Endothelial cell of umbilical vein (primary cell): ENCODE measurements at regions of chr17 and their contacts with region 1.

Region 1: DNA sequence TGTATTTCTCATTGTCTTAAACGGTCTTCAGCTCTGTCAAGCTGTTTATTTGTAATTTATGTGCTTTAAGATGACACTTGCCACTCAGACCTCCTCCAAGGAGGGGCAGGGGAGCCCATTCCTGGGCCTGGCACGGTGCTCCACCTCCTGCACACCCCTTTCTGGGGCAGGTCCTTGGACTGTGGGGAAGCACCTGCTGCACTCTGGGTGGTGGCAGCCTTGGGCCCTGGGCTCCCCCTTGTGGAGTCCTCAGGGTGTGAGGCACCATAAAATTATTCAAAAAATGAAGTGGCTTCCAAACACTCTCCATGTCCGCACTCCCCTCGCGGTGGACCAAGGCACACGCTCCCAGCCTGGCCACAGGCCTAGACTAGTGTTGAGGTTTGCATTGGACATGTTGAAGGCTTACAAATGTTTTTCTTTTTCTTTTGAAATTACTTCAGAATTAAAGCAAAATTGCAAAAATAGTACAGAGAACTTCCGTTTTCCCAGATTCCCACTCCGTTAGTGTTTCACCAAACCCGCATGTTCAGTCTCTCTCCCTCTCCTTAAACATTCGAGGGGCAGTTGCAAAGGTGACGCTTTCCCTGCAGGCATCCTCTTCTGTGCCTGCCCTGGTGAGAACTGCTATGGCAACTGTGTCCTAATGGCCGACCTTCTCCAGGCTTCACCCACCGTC is 32.4 kb downstream of the FOXK2 start:
- DNase-seq: peak; percentile 81
- H3K4me3 ChIP-seq: no peak overlapping the region
- H3K27ac ChIP-seq: no peak overlapping the region
- H3K4me1 ChIP-seq: no peaks in the 10 kb centered on the region
- H3K27me3 ChIP-seq: no peaks in the 10 kb centered on the region
- CTCF ChIP-seq: peak; percentile 73 to 82
- POLR2A ChIP-seq: no peak

Region 2: GRCh38 chr17:82351716-82352488 is 200.0 kb before region 1 on chr17:
- CTCF ChIA-PET with region 1: interaction called, 6 read pairs
- POLR2A ChIA-PET with region 1: no interaction called
- dilution Hi-C with region 1: no loop called
- intact Hi-C with region 1: loop called (anchors 2 kb)
- DNase-seq: peak; percentile 85
- H3K4me3 ChIP-seq: no peak overlapping the region
- H3K27ac ChIP-seq: no peak overlapping the region
- H3K4me1 ChIP-seq: no peaks in the 10 kb centered on the region
- H3K27me3 ChIP-seq: no peaks in the 10 kb centered on the region
- CTCF ChIP-seq: peak; percentile 93 to 96
- POLR2A ChIP-seq: no peak

Region 3: GRCh38 chr17:82494236-82495055 is 57.5 kb before region 1 on chr17:
- CTCF ChIA-PET with region 1: interaction called, 18 read pairs
- POLR2A ChIA-PET with region 1: no interaction called
- dilution Hi-C with region 1: no loop called
- intact Hi-C with region 1: loop called (anchors 1 kb)
- DNase-seq: peak; percentile 92
- H3K4me3 ChIP-seq: no peak overlapping the region
- H3K27ac ChIP-seq: no peak overlapping the region
- H3K4me1 ChIP-seq: peaks cover 8% of the 10 kb centered on the region
- H3K27me3 ChIP-seq: no peaks in the 10 kb centered on the region
- CTCF ChIP-seq: peak; percentile 85 to 94
- POLR2A ChIP-seq: no peak

Region 4: GRCh38 chr17:82518826-82519810 is 32.8 kb before region 1 on chr17 and contains the start of gene FOXK2:
- CTCF ChIA-PET with region 1: interaction called, 24 read pairs
- POLR2A ChIA-PET with region 1: interaction called, 3 read pairs
- dilution Hi-C with region 1: no loop called
- intact Hi-C with region 1: loop called (anchors 1 kb)
- DNase-seq: peak; percentile 93
- H3K4me3 ChIP-seq: peak within 1 kb of the TSS; percentile 81 to 93 (median 88)
- H3K27ac ChIP-seq: peak within 1 kb of the TSS; percentile 82
- H3K4me1 ChIP-seq: peaks cover 2% of the 10 kb centered on the region
- H3K27me3 ChIP-seq: no peaks in the 10 kb centered on the region
- CTCF ChIP-seq: no peak
- POLR2A ChIP-seq: peak; percentile 78
- total RNA-seq, gene FOXK2: 75.1 and 79.3 TPM in 2 replicates

Region 5: GRCh38 chr17:82536512-82537201 is 15.3 kb before region 1 on chr17:
- CTCF ChIA-PET with region 1: interaction called, 32 read pairs
- POLR2A ChIA-PET with region 1: no interaction called
- dilution Hi-C with region 1: no loop called
- intact Hi-C with region 1: loop called (anchors 2 kb)
- DNase-seq: no peak
- H3K4me3 ChIP-seq: peak overlapping the region in 1 of 3 experiments; percentile 44
- H3K27ac ChIP-seq: peak overlapping the region; percentile 98
- H3K4me1 ChIP-seq: peaks cover 35% of the 10 kb centered on the region
- H3K27me3 ChIP-seq: no peaks in the 10 kb centered on the region
- CTCF ChIP-seq: no peak
- POLR2A ChIP-seq: no peak